ENCODE measurements at regions of chr12 and their contacts with region 1.

Region 1: DNA sequence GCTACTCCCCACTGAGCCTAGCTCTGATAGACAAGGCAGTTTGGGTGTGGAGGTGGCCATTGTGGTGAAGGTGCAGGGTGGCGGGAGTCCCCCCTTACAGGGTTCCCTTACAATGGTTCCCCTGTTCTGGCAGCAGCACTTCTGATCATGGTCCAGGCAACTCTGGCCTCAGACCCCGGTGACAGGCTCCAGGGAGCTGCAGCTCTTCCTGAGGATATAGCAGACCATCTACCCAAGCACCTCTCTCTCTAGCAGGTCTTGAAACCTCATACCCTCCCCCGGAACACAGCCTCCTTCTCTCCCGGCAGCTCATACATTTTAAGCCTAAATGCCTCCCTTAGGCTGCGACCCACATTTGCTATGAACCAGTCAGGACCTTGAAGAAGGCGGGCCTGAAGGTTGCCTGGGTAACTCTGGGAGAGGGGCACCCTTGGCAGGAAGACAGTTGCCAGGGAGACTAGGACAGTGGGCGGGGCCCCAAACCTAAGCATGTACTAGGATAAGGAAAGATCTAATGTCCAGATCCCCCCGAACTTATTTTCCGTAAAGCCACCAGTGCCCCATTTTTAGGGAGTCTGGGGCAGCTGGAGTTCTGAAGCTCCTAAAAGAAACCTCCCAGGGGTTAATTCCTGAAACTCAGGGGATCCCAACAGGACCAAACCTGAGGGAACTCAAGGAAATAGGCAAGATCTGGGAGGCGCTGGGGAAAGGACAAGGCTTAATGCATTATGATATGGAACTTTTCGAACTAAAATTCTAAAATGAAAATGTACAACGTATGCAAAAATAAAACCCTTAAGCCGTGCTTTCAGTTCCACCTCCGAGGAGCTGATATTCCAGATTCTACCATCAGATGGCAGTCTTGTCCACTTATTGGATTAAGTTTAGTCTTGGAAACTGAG is 4.5 kb upstream of the GDF11 start:
- DNase-seq: peak; percentile 42 to 92
- ATAC-seq: peak; percentile 62 to 76 (median 65)
- H3K4me3 ChIP-seq: peak overlapping the region; percentile 52
- H3K4me3 Mint-ChIP-seq: peak overlapping the region; percentile 88
- H3K27ac ChIP-seq: peak overlapping the region; percentile 65
- H3K27ac Mint-ChIP-seq: peak overlapping the region; percentile 86 to 94
- H3K4me1 ChIP-seq: peaks cover 26% of the 10 kb centered on the region
- H3K4me1 Mint-ChIP-seq: peaks cover 36 to 38% of the 10 kb centered on the region in 2 donors
- H3K27me3 ChIP-seq: no peaks in the 10 kb centered on the region
- H3K27me3 Mint-ChIP-seq: no peaks in the 10 kb centered on the region
- CTCF ChIP-seq: peak; percentile 95

Region 2: GRCh38 chr12:55797068-55797467 is 58.7 kb after region 1 on chr12:
- intact Hi-C with region 1: loop called (anchors 2 kb)
- DNase-seq: peak in 1 of 2 donors; percentile 51
- ATAC-seq: no peak
- H3K4me3 ChIP-seq: no peak overlapping the region
- H3K4me3 Mint-ChIP-seq: no peak overlapping the region
- H3K27ac ChIP-seq: no peak overlapping the region
- H3K27ac Mint-ChIP-seq: no peak overlapping the region
- H3K4me1 ChIP-seq: no peaks in the 10 kb centered on the region
- H3K4me1 Mint-ChIP-seq: peaks cover 10 to 11% of the 10 kb centered on the region in 2 donors
- H3K27me3 ChIP-seq: no peaks in the 10 kb centered on the region
- H3K27me3 Mint-ChIP-seq: no peaks in the 10 kb centered on the region
- CTCF ChIP-seq: peak; percentile 17

Region 3: GRCh38 chr12:55809274-55809673 is 70.9 kb after region 1 on chr12:
- intact Hi-C with region 1: no loop called
- DNase-seq: no peak
- ATAC-seq: no peak
- H3K4me3 ChIP-seq: no peak overlapping the region
- H3K4me3 Mint-ChIP-seq: no peak overlapping the region
- H3K27ac ChIP-seq: no peak overlapping the region
- H3K27ac Mint-ChIP-seq: no peak overlapping the region
- H3K4me1 ChIP-seq: no peaks in the 10 kb centered on the region
- H3K4me1 Mint-ChIP-seq: peaks cover 29 to 34% of the 10 kb centered on the region in 2 donors
- H3K27me3 ChIP-seq: no peaks in the 10 kb centered on the region
- H3K27me3 Mint-ChIP-seq: no peaks in the 10 kb centered on the region
- CTCF ChIP-seq: no peak

Region 4: DNA sequence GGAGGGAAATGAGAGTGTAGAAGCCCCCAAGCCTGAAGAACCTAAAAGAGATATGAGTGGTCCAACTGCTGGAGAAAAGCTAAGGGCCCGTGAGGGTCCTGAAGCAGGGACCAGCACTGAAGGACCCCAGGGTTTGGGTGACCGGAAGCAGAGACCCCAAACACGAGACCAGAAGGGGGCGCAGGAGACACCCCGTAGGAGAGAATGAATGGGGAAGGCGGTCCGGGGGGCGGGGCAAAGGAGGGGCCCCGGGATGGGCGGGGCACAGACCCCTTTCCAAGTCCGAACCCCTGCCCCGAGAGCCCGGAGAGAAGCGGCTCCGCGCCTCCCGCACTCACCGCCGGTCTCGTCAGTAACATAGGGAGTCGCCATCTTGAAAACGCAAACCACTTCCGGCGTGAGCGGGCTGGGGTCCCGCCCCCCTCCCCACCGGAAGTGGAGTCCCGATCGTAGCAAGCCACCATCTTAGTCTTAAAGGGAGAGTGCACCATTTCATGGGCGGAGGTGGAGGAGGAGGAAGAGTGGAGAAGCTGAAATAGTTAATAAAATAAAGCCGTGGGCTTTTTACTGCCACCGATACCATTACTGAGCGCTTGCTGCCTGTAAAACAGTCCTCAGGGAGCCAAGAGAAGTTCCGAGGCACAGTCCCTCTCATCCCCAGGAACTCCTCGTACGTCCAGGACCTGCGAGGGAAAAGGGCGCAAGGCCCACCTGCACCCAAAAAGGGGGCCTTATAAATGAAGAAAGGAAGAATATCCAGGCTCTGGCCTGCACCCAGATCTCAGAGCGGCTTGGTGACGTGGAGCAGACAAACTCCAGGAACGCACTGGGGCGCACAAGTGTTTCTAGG is 188.6 kb after region 1 on chr12:
- intact Hi-C with region 1: loop called (anchors 5 kb)
- DNase-seq: peak; percentile 83 to 96
- ATAC-seq: peak; percentile 60 to 80 (median 70)
- H3K4me3 ChIP-seq: peak overlapping the region; percentile 95
- H3K4me3 Mint-ChIP-seq: peak overlapping the region; percentile 97
- H3K27ac ChIP-seq: peak overlapping the region; percentile 86
- H3K27ac Mint-ChIP-seq: peak overlapping the region; percentile 97 to 98
- H3K4me1 ChIP-seq: peaks cover 48% of the 10 kb centered on the region
- H3K4me1 Mint-ChIP-seq: peaks cover 55 to 69% of the 10 kb centered on the region in 2 donors
- H3K27me3 ChIP-seq: no peaks in the 10 kb centered on the region
- H3K27me3 Mint-ChIP-seq: no peaks in the 10 kb centered on the region
- CTCF ChIP-seq: peak; percentile 85

Region 5: DNA sequence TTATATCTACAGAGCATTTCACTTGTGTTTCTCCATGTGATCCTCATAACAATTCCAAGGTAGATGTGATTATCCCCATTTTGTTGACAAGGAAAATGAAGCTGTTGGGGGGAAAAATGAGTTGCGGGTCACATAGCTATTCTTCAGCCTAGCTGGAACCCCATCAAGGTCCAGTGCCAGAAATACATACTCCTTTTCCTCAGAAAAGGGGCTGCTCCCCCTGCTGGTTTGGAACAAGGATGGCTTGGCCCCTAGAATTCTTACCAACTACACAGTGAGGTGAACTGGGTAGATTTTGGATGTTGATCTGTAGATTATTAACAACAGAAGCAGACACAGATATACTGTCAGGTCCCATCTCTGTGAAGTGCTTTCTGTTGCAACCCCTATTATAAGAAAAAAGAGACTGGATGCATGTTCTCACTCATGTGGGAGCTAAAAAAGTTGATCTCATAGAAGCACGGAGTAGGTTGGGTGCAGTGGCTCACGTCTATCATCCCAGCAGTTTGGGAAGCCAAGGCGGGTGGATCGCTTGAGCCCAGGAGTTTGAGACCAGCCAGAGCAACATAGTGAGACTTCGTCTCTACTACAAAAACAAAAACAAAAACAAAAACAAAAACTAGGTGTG is 291.4 kb after region 1 on chr12:
- intact Hi-C with region 1: loop called (anchors 5 kb)
- DNase-seq: peak in 1 of 2 donors; percentile 73
- ATAC-seq: peak in 2 of 3 donors; percentile 44 to 69
- H3K4me3 ChIP-seq: no peak overlapping the region
- H3K4me3 Mint-ChIP-seq: no peak overlapping the region
- H3K27ac ChIP-seq: no peak overlapping the region
- H3K27ac Mint-ChIP-seq: no peak overlapping the region
- H3K4me1 ChIP-seq: peaks cover 4% of the 10 kb centered on the region
- H3K4me1 Mint-ChIP-seq: no peaks in the 10 kb centered on the region
- H3K27me3 ChIP-seq: no peaks in the 10 kb centered on the region
- H3K27me3 Mint-ChIP-seq: no peaks in the 10 kb centered on the region
- CTCF ChIP-seq: peak; percentile 32

Region 6: GRCh38 chr12:56127888-56128669 is 389.7 kb after region 1 on chr12 and contains the start of gene ESYT1:
- intact Hi-C with region 1: loop called (anchors 2 kb)
- DNase-seq: peak; percentile 91 to 100
- ATAC-seq: peak; percentile 87 to 96 (median 90)
- H3K4me3 ChIP-seq: peak within 1 kb of the TSS; percentile 90
- H3K4me3 Mint-ChIP-seq: peak within 1 kb of the TSS; percentile 97
- H3K27ac ChIP-seq: peak within 1 kb of the TSS; percentile 85
- H3K27ac Mint-ChIP-seq: peak within 1 kb of the TSS; percentile 88 to 93
- H3K4me1 ChIP-seq: peaks cover 45% of the 10 kb centered on the region
- H3K4me1 Mint-ChIP-seq: peaks cover 52 to 68% of the 10 kb centered on the region in 2 donors
- H3K27me3 ChIP-seq: no peaks in the 10 kb centered on the region
- H3K27me3 Mint-ChIP-seq: no peaks in the 10 kb centered on the region
- CTCF ChIP-seq: no peak
- total RNA-seq, gene ESYT1: 198 to 215 (median 199) TPM

Region 7: DNA sequence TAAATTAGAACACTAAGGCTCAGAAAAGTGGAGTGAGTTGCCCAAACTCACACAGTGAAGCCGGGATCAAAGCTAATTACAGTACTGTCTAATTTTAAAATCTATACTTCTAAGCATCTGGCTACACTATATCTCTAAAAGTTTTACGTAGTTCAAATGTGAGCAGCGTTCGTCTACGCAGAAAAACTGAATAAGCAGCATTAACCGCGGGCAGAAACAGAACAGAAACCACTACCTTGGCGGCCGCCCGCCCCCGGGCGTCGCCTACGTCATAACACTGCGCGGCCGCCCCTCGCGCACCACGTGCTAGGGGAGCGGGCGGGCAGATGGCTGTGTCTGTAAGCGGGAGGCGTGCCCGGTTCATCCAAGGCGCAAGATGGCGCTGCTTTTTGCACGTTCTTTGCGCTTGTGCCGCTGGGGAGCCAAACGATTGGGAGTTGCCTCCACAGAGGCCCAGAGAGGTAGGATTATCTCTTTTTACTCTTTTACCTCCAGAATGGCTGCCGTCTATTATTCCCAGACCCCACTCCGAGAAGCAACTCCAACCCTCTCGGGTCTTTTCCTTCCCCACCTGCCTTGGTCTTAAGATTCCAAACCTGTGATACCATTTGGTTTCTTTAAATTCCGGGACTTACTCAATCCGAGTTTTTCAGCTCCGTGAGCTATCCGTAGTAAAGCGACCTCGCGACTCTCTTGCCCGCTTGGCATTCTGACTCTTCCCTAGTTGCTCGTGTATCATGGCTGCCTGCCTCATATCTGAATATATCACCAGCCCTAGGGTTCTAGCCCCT is 730.0 kb after region 1 on chr12 and contains the start of gene SPRYD4:
- intact Hi-C with region 1: loop called (anchors 2 kb)
- DNase-seq: peak; percentile 93 to 97
- ATAC-seq: peak; percentile 91 to 98 (median 97)
- H3K4me3 ChIP-seq: peak within 1 kb of the TSS; percentile 80
- H3K4me3 Mint-ChIP-seq: peak within 1 kb of the TSS; percentile 95
- H3K27ac ChIP-seq: peak within 1 kb of the TSS; percentile 92
- H3K27ac Mint-ChIP-seq: peak within 1 kb of the TSS; percentile 94
- H3K4me1 ChIP-seq: peaks cover 20% of the 10 kb centered on the region
- H3K4me1 Mint-ChIP-seq: peaks cover 22 to 25% of the 10 kb centered on the region in 2 donors
- H3K27me3 ChIP-seq: no peaks in the 10 kb centered on the region
- H3K27me3 Mint-ChIP-seq: no peaks in the 10 kb centered on the region
- CTCF ChIP-seq: no peak
- total RNA-seq, gene SPRYD4: 5.6 to 6.2 (median 5.6) TPM

Measured in natural killer cell (primary cell).